ENCODE measurements at regions of chr1 and their contacts with region 1.

Region 1: GRCh38 chr1:228101994-228102790 is 933 bp downstream of the C1orf35 start:
- DNase-seq: peak; percentile 70 to 88 (median 80)
- ATAC-seq: peak; percentile 78
- H3K4me3 ChIP-seq: peak overlapping the region; percentile 100
- H3K27ac ChIP-seq: peak overlapping the region; percentile 87
- H3K4me1 ChIP-seq: peaks cover 15 to 62% of the 10 kb centered on the region in 2 experiments
- H3K27me3 ChIP-seq: no peaks in the 10 kb centered on the region
- CTCF ChIP-seq: peak; percentile 54 to 74 (median 56)
- EP300 ChIP-seq: no peak
- POLR2A ChIP-seq: no peak
- RAD21 ChIP-seq: peak; percentile 21 to 41; a peak in 3 of 4 replicates

Region 2: GRCh38 chr1:228087771-228088251 is 14.4 kb before region 1 on chr1:
- CTCF ChIA-PET with region 1: interaction called, 4 read pairs
- POLR2A ChIA-PET with region 1: interaction called, 92 read pairs
- in situ Hi-C with region 1: no loop called
- intact Hi-C with region 1: loop called (anchors 2 kb)
- DNase-seq: no peak
- ATAC-seq: no peak
- H3K4me3 ChIP-seq: no peak overlapping the region
- H3K27ac ChIP-seq: no peak overlapping the region; the same call in 2 of the 3 replicates
- H3K4me1 ChIP-seq: peaks cover 46 to 53% of the 10 kb centered on the region in 2 experiments; a peak in 4 of 5 replicates
- H3K27me3 ChIP-seq: no peaks in the 10 kb centered on the region
- CTCF ChIP-seq: no peak
- EP300 ChIP-seq: no peak
- POLR2A ChIP-seq: 0 out of 2 replicates have a peak, but pooled peaks have one; percentile 28
- RAD21 ChIP-seq: no peak

Region 3: GRCh38 chr1:228120857-228121489 is 18.8 kb after region 1 on chr1:
- CTCF ChIA-PET with region 1: no interaction called
- POLR2A ChIA-PET with region 1: no interaction called
- in situ Hi-C with region 1: no loop called
- intact Hi-C with region 1: no loop called
- DNase-seq: no peak
- ATAC-seq: peak; percentile 77
- H3K4me3 ChIP-seq: no peak overlapping the region
- H3K27ac ChIP-seq: no peak overlapping the region
- H3K4me1 ChIP-seq: peaks cover 0 to 3% of the 10 kb centered on the region in 2 experiments; a peak in 2 of 5 replicates
- H3K27me3 ChIP-seq: no peaks in the 10 kb centered on the region
- CTCF ChIP-seq: no peak
- EP300 ChIP-seq: no peak
- POLR2A ChIP-seq: no peak
- RAD21 ChIP-seq: no peak